ENCODE measurements at regions of chr9 and their contacts with region 1.

Region 1: DNA sequence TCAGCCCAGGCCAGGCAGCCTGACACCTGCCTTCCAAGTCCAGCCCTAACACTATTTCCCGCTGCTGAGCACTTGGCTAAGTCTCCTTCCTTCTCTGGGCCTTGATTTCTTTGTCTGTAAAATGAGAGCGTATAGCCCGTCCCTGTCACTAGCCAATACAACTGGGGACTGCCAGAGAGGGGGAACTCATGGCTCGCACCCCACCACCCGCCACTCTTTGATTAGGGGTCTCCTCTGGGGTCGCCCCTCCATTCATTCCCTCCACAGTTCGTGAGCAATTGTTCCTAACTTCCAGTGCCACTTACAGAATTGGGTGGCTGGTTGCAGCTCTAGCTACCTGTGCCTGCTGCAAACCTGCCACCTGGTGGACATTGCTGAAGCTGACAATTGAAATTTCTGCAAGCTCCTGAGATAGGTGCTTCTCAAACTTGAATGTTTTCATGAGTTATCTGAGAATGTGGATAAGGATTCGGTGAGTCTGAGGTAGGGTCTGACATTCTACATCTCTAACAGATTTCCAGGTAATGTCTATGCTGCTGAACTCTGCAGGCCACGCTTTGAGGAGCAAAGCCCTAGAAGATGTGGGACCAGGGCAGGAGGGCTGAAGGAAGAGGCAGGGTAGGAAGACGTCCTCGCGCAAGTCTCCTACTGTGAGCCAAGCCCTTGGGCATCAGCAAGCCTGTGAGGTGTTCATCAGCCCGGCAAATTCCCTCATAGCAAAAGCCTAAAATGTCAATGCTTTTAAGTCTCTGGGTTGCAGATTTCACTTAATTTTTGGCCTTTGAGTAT is 13.3 kb upstream of the RECK start:
- DNase-seq: peak; percentile 44 to 56
- H3K4me3 ChIP-seq: no peak overlapping the region
- H3K27ac ChIP-seq: no peak overlapping the region
- H3K4me1 ChIP-seq: no peaks in the 10 kb centered on the region
- H3K27me3 ChIP-seq: no peaks in the 10 kb centered on the region
- CTCF ChIP-seq: peak; percentile 79

Region 2: GRCh38 chr9:35619800-35620158 is 403.7 kb before region 1 on chr9:
- CTCF ChIA-PET with region 1: interaction called, 10 read pairs
- POLR2A ChIA-PET with region 1: no interaction called
- intact Hi-C with region 1: no loop called
- DNase-seq: no peak
- H3K4me3 ChIP-seq: no peak overlapping the region
- H3K27ac ChIP-seq: no peak overlapping the region
- H3K4me1 ChIP-seq: no peaks in the 10 kb centered on the region
- H3K27me3 ChIP-seq: no peaks in the 10 kb centered on the region
- CTCF ChIP-seq: no peak

Region 3: DNA sequence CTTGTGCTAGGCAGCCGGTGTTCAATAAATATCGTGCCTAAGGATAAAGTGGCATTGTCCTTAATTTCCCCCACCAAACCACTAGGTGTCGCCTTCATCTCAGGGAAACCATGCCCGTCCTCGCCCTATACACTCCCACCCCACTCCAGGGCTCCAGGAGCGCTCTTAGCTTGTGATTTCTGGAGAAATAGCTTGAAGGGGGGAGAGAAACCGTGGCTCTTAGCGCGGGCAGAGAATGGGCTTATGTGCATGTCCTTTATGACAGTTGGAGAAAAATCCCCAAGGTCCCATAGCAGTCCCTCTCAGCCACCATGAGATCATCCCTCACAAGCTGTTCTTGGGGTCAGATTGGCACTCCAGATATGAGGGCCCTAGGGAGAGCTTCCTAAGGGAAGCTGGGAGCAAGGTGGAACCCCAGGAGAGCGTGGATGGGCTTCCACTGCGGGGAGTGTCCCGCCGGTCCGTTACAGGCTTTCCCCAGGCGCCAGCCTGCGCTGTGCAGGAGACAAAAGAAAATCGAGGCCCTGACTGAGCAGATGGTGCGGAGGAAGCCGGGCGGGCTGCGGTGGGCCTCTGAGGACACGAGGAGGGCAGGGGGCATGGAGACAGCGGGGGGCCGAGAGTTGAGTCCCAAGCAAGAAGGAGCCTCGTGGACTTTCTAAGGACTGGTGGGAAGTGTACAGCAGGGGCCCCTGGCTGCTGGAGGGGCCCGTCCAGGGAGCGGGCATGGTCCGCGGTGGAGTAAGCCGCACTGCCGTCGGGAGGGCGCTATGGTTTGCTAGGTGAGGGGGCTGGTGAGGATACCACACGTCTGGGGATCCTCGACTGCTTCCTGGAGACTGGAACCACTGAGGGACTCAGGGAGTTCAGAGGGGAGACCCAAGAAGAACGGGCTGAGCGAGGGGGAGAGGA is 232.8 kb before region 1 on chr9:
- CTCF ChIA-PET with region 1: interaction called, 8 read pairs
- POLR2A ChIA-PET with region 1: no interaction called
- intact Hi-C with region 1: loop called (anchors 1 kb)
- DNase-seq: peak in 1 of 2 experiments; percentile 34
- H3K4me3 ChIP-seq: no peak overlapping the region
- H3K27ac ChIP-seq: no peak overlapping the region
- H3K4me1 ChIP-seq: 0 out of 2 replicates have a peak, but pooled peaks cover 4% of the 10 kb centered on the region
- H3K27me3 ChIP-seq: no peaks in the 10 kb centered on the region
- CTCF ChIP-seq: peak; percentile 80

Region 4: GRCh38 chr9:35903049-35903448 is 120.4 kb before region 1 on chr9:
- CTCF ChIA-PET with region 1: interaction called, 6 read pairs
- POLR2A ChIA-PET with region 1: no interaction called
- intact Hi-C with region 1: loop called (anchors 2 kb)
- DNase-seq: peak in 1 of 2 experiments; percentile 54
- H3K4me3 ChIP-seq: no peak overlapping the region
- H3K27ac ChIP-seq: no peak overlapping the region
- H3K4me1 ChIP-seq: peaks cover 38% of the 10 kb centered on the region
- H3K27me3 ChIP-seq: no peaks in the 10 kb centered on the region
- CTCF ChIP-seq: peak; percentile 78

Region 5: DNA sequence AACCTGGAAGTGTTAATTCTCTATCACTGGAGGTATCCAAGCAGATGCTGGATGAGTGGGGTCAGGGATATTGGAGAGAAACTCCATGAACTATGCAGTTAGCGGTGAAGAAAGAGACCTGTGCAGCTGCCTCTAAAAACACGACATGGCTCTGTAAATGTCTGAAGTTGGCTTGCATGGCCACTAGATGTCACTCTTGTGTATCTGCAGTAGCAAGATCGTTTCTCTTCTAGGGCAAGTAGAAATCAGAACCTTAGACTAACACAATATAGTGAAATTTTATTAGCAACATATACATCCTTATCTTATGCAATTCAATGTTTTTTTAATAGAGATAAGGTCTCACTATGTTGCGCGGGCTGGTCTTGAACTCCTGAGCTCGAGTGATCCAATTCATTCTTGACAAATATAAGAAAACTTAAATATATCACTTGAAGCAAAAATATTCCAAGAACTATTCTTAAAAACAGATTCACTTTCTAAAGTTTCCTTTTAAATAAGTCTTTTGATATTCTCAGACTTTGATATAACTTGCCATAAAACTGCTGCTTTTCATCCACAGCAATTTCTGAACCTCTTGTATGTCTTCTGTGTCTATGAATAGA is 68.4 kb before region 1 on chr9:
- CTCF ChIA-PET with region 1: no interaction called
- POLR2A ChIA-PET with region 1: no interaction called
- intact Hi-C with region 1: loop called (anchors 1 kb)
- DNase-seq: peak; percentile 30 to 56
- H3K4me3 ChIP-seq: no peak overlapping the region
- H3K27ac ChIP-seq: no peak overlapping the region
- H3K4me1 ChIP-seq: peaks cover 13% of the 10 kb centered on the region
- H3K27me3 ChIP-seq: no peaks in the 10 kb centered on the region
- CTCF ChIP-seq: peak; percentile 77

Region 6: GRCh38 chr9:36166101-36166927 is 142.9 kb after region 1 on chr9:
- CTCF ChIA-PET with region 1: no interaction called
- POLR2A ChIA-PET with region 1: no interaction called
- intact Hi-C with region 1: loop called (anchors 5 kb)
- DNase-seq: peak; percentile 69 to 81
- H3K4me3 ChIP-seq: peak overlapping the region; percentile 37; the same call in 1 of the 2 replicates
- H3K27ac ChIP-seq: no peak overlapping the region
- H3K4me1 ChIP-seq: 0 out of 2 replicates have a peak, but pooled peaks cover 3% of the 10 kb centered on the region
- H3K27me3 ChIP-seq: no peaks in the 10 kb centered on the region
- CTCF ChIP-seq: peak; percentile 79

Region 7: GRCh38 chr9:36190388-36191287 is 167.2 kb after region 1 on chr9 and contains the start of gene CLTA:
- CTCF ChIA-PET with region 1: no interaction called
- POLR2A ChIA-PET with region 1: no interaction called
- intact Hi-C with region 1: loop called (anchors 10 kb)
- DNase-seq: peak; percentile 93 to 94
- H3K4me3 ChIP-seq: peak within 1 kb of the TSS; percentile 91
- H3K27ac ChIP-seq: peak within 1 kb of the TSS; percentile 74
- H3K4me1 ChIP-seq: peaks cover 30% of the 10 kb centered on the region
- H3K27me3 ChIP-seq: no peaks in the 10 kb centered on the region
- CTCF ChIP-seq: peak; percentile 50; the same call in 1 of the 2 replicates
- total RNA-seq, gene CLTA: 146 and 164 TPM in 2 replicates